ENCODE measurements at regions of chr1 and their contacts with region 1.

Region 1: DNA sequence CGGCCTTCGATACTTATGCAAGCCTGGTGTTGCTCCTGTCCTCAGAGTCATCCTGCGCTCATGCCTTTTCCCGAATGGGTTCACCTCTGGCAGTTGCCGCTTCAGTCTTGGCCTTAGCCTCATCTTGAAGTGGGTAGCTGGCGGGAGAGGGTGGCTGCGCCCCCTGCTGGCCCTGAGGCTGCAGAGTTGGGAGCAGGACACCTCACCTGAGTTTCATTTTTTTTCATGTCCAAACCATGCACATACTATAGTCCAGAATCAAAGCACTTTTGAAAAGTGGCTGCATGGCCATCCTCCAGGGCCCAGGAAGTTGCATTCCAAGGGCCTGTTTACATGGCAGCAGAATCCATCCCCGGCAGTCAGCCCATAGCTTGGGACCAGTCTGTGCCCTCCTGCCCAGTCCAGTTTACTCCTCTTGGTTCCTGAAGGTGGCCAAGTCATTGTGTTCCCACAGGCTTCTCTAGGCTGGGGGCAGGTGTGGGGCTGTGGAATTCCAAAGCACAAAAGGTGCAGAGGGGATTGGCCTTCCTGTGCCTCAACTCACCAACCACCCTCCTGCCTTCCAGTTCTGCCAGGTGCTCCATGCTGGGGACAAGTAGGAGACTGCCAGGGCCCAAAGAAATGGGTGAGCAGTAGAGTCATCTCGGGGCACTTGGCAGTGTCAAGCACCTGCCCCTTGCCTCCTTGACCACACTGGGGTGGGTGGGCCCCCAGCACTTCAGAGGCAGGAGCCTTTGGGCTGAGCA is 44.0 kb downstream of the YARS1 start:
- DNase-seq: peak; percentile 72 to 85
- H3K4me3 ChIP-seq: no peak overlapping the region
- H3K27ac ChIP-seq: peak overlapping the region; percentile 51; the same call in 1 of the 2 replicates
- H3K4me1 ChIP-seq: peaks cover 62% of the 10 kb centered on the region
- H3K27me3 ChIP-seq: no peaks in the 10 kb centered on the region
- CTCF ChIP-seq: peak; percentile 96

Region 2: DNA sequence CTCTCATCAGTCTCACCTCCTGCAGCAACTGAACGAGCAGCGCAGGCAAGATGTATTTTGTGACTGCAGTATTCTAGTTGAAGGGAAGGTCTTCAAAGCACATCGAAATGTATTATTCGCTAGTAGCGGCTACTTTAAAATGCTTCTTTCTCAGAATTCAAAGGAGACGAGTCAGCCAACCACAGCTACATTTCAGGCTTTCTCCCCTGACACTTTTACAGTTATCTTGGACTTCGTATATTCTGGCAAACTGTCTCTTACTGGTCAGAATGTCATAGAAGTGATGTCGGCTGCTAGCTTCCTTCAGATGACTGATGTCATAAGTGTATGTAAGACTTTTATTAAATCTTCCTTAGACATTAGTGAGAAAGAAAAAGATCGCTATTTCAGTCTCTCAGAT is 180.2 kb before region 1 on chr1:
- CTCF ChIA-PET with region 1: no interaction called
- POLR2A ChIA-PET with region 1: interaction called, 10 read pairs
- intact Hi-C with region 1: no loop called
- DNase-seq: no peak
- H3K4me3 ChIP-seq: no peak overlapping the region
- H3K27ac ChIP-seq: no peak overlapping the region
- H3K4me1 ChIP-seq: peaks cover 5% of the 10 kb centered on the region; the same call in 1 of the 2 replicates
- H3K27me3 ChIP-seq: no peaks in the 10 kb centered on the region
- CTCF ChIP-seq: no peak

Region 3: GRCh38 chr1:32741413-32742198 is 31.6 kb before region 1 on chr1:
- CTCF ChIA-PET with region 1: no interaction called
- POLR2A ChIA-PET with region 1: no interaction called
- intact Hi-C with region 1: loop called (anchors 1 kb)
- DNase-seq: no peak
- H3K4me3 ChIP-seq: peak overlapping the region; percentile 70
- H3K27ac ChIP-seq: peak overlapping the region; percentile 84
- H3K4me1 ChIP-seq: peaks cover 45% of the 10 kb centered on the region
- H3K27me3 ChIP-seq: no peaks in the 10 kb centered on the region
- CTCF ChIP-seq: no peak; the same call in 1 of the 2 replicates

Region 4: GRCh38 chr1:32753532-32754312 is 19.5 kb before region 1 on chr1:
- CTCF ChIA-PET with region 1: interaction called, 23 read pairs
- POLR2A ChIA-PET with region 1: interaction called, 7 read pairs
- intact Hi-C with region 1: loop called (anchors 2 kb)
- DNase-seq: peak; percentile 77 to 89
- H3K4me3 ChIP-seq: peak overlapping the region; percentile 96
- H3K27ac ChIP-seq: peak overlapping the region; percentile 68
- H3K4me1 ChIP-seq: peaks cover 48% of the 10 kb centered on the region
- H3K27me3 ChIP-seq: no peaks in the 10 kb centered on the region
- CTCF ChIP-seq: no peak

Region 5: DNA sequence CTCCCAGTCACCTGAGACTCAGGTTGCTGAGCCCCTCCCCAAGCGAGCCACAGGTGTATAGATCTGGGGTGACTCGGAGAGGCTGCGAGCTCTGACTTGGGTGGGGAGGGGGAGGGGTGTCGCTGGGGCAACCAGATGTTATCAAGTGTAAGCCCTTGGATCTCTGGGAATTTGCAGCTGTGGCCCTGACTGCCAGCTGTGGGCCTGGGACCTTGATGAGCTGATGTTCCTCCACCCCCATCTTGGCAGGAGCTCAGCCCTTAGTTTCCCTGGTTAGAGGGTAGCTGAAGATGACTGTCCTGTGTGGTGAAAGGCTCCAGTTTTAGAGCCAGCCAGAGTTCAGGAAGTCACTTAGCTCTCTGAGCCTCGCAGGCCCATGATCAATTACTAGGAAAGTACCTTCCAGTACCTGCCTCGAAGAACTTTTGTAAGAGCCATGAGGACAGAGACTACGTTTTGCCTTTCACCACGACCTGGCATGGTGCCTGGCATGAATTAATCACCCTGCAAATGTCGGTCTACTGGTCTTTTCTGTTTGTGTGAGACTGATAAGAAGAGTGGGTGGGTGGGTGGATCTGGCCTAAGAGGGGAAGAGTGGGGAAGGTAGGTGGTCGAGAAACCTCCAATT is 11.8 kb before region 1 on chr1:
- CTCF ChIA-PET with region 1: interaction called, 4 read pairs
- POLR2A ChIA-PET with region 1: interaction called, 21 read pairs
- intact Hi-C with region 1: loop called (anchors 1 kb)
- DNase-seq: peak; percentile 84 to 96
- H3K4me3 ChIP-seq: peak overlapping the region; percentile 51
- H3K27ac ChIP-seq: peak overlapping the region; percentile 99
- H3K4me1 ChIP-seq: peaks cover 96% of the 10 kb centered on the region
- H3K27me3 ChIP-seq: no peaks in the 10 kb centered on the region
- CTCF ChIP-seq: no peak